Activated T-helper 2 cell treated with anti-CD3 and anti-CD28 coated beads, Interferon-gamma antibody, Interleukin-2, Interleukin-4, amounts not matched to agents 10 μg/mL and 5 μg/mL and 100 μg/mL, durations not matched to agents 14 hours and 24 hours and 36 hours (primary cell): ENCODE measurements at regions of chr13 and their contacts with region 1.

Region 1: DNA sequence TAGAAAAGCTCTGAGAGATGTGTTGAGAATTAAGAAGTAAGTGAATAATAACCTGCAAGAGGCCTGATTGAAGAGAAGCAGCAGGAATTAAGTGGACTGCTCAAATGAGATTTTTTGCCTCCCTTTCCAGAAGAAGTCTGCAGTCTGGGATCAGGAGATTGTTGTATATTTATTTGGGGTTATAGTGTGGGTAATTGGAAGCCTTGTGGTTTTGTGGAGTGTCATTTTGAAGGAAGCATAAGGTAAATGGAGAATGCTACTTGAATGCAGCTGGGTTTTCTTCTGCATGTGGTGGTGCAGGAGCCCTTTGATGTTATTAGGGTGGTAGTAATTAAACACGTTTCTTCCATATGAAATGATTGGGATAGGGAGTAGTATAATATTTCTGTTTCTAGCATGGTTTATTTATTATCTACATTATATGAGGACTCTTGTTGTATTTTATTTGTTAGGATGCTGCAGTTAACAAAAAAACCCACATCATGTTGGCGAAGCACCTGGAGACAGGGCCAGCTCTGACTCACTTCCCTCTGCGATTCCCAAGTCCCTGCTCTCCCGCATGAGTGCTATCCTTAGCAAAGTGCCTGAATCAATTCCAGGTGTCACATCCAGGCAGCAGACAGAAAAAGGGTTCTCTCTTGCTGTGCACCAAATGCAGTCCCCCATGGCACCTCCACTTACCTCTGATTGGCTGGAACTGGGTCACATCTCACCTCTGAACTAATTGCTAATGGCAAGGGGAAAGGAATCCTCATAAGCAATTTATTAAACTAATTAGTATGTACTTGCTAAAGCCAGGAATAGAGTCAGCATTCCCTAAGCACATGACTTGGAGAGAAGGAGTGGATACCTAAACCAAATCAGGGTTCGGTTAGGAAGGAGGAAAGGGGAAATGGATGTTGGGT is 54.8 kb downstream of the DGKH start:
- DNase-seq: no peak
- H3K4me3 Mint-ChIP-seq: no peak overlapping the region
- H3K27ac Mint-ChIP-seq: no peak overlapping the region
- H3K4me1 Mint-ChIP-seq: peaks cover 18% of the 10 kb centered on the region
- H3K27me3 Mint-ChIP-seq: no peaks in the 10 kb centered on the region

Region 2: GRCh38 chr13:41774605-41775218 is 328.5 kb before region 1 on chr13:
- intact Hi-C with region 1: loop called (anchors 10 kb)
- DNase-seq: no peak
- H3K4me3 Mint-ChIP-seq: no peak overlapping the region
- H3K27ac Mint-ChIP-seq: no peak overlapping the region
- H3K4me1 Mint-ChIP-seq: no peaks in the 10 kb centered on the region
- H3K27me3 Mint-ChIP-seq: no peaks in the 10 kb centered on the region

Region 3: DNA sequence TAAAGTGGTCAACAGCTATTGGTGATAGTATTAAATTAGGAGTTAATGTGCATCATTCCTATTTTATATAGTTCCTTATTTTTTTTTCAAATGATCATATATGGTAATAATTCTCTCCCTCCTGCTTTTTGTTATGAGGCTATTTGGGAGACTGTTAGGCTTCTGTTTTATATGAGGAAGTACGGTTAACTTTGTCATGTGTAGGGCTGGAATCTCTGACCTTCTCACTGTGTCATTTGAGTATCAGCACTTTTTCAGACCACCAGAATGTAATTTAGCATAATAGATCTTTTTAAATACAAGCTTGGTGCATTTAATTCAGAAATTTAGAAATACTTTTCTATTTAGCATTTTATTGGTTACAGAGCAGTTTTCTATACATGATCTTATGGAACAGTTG is 47.1 kb before region 1 on chr13:
- intact Hi-C with region 1: loop called (anchors 5 kb)
- DNase-seq: no peak
- H3K4me3 Mint-ChIP-seq: no peak overlapping the region
- H3K27ac Mint-ChIP-seq: no peak overlapping the region
- H3K4me1 Mint-ChIP-seq: peaks cover 25% of the 10 kb centered on the region
- H3K27me3 Mint-ChIP-seq: no peaks in the 10 kb centered on the region

Region 4: GRCh38 chr13:42345367-42345766 is 242.2 kb after region 1 on chr13:
- intact Hi-C with region 1: no loop called
- DNase-seq: no peak
- H3K4me3 Mint-ChIP-seq: no peak overlapping the region
- H3K27ac Mint-ChIP-seq: no peak overlapping the region
- H3K4me1 Mint-ChIP-seq: peaks cover 48% of the 10 kb centered on the region
- H3K27me3 Mint-ChIP-seq: no peaks in the 10 kb centered on the region